H1 (cell line): ENCODE measurements at regions of chr15 and their contacts with region 1.

Region 1: GRCh38 chr15:99104788-99105513 is at the start of gene SYNM:
- DNase-seq: peak in 1 of 2 experiments; percentile 87
- H3K4me3 ChIP-seq: peak within 1 kb of the TSS; percentile 14 to 57 (median 38)
- H3K27ac ChIP-seq: no peak within 1 kb of the TSS
- H3K4me1 ChIP-seq: peaks cover 0 to 2% (median 1%) of the 10 kb centered on the region in 4 experiments; a peak in 2 of 7 replicates
- H3K27me3 ChIP-seq: peaks cover 16 to 44% (median 32%) of the 10 kb centered on the region in 4 experiments
- CTCF ChIP-seq: peak; percentile 77 to 97 (median 85)
- EP300 ChIP-seq: peak in 1 of 2 experiments; percentile 29; a peak in 1 of 3 replicates
- POLR2A ChIP-seq: peak in 1 of 2 experiments; percentile 41; a peak in 1 of 3 replicates
- RAD21 ChIP-seq: peak; percentile 58 to 87
- total RNA-seq, gene SYNM: 2.0 and 2.2 TPM in 2 replicates

Region 2: DNA sequence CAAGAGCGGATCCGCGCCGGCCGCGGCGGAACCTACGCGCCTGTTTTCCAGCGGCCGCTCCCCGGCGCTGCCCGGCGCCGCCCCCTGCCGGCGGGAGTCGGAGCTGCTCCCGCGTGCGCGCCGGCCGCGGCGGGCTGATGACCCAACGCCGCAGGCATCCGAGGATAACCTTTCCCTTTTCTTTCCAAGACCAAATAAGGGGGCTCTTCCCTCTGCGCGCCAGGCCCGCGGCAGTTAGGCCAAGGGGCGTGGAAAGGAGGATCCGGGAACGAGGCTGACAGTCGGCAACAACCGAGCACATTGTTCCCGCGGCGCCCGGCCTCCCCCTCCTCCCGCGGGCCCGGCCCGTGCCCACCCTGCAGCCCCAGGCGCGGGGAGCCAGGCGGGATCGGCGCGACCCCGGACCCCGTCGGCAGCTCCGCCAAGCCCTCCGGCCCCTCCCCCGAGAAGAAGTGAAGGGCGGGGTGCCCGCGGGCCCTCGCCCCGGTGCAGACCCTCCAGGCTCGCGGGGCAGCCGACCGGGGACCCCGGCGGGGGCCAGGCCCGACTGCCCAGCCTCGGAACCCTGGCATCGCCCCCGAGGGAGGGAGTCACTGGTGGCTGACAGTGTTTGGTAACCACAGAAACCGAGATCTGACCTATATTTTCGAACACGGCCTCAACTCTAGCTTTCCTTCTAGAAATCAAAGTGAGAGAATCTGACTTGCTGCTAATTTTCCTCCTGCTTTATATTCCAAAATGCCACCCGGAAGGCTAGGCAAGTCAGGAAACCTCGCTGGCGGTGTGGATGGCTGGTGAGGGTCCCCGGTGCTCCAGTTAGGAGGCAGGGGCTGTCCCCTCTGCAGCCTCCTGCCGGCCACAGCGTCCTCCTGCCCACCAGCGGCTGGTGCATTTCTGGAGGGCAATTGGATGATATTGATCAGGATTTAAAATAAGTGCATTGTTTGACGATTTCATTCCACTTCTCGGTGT is 45.7 kb before region 1 on chr15:
- CTCF ChIA-PET with region 1: interaction called, 11 read pairs
- POLR2A ChIA-PET with region 1: interaction called, 5 read pairs
- DNase-seq: peak; percentile 70 to 86
- H3K4me3 ChIP-seq: peak overlapping the region; percentile 41 to 70 (median 50)
- H3K27ac ChIP-seq: peak overlapping the region; percentile 43; the same call in 1 of the 2 replicates
- H3K4me1 ChIP-seq: peaks cover 0 to 5% (median 0%) of the 10 kb centered on the region in 4 experiments; a peak in 3 of 7 replicates
- H3K27me3 ChIP-seq: 0 out of 7 replicates have a peak, but pooled peaks cover 0 to 9% (median under 1%) of the 10 kb centered on the region in 4 experiments
- CTCF ChIP-seq: peak; percentile 76 to 86 (median 83)
- EP300 ChIP-seq: peak in 1 of 2 experiments; percentile 24; a peak in 1 of 3 replicates
- POLR2A ChIP-seq: peak in 1 of 2 experiments; percentile 71; a peak in 2 of 3 replicates
- RAD21 ChIP-seq: peak; percentile 38 to 77; a peak in 3 of 4 replicates

Region 3: GRCh38 chr15:99118801-99119546 is 14.0 kb after region 1 on chr15:
- CTCF ChIA-PET with region 1: interaction called, 11 read pairs
- POLR2A ChIA-PET with region 1: interaction called, 6 read pairs
- DNase-seq: no peak
- H3K4me3 ChIP-seq: no peak overlapping the region
- H3K27ac ChIP-seq: no peak overlapping the region
- H3K4me1 ChIP-seq: peaks cover 0 to 11% (median 4%) of the 10 kb centered on the region in 4 experiments; a peak in 5 of 7 replicates
- H3K27me3 ChIP-seq: no peaks in the 10 kb centered on the region
- CTCF ChIP-seq: no peak
- EP300 ChIP-seq: no peak
- POLR2A ChIP-seq: no peak
- RAD21 ChIP-seq: no peak

Region 4: DNA sequence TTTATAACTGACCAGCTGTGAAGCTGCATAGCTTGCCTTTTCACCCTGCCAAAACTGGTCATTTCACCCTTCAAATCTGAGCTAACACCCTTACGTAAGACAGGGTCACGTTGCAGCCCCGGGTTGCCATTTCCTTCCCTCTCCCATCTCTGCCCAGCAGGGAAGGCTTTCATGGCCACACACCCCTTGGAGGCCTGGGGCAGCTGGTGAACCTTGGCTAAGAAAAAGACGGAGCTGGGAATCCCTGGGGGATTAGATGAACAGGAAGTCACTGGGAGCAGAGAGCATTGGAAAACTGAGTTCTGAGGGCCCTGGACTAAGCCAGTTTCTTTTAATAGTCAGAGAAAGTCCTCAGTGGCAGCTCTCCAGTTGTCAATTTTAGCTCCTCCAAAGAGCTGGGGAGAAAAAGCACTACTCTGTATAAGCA is 76.6 kb after region 1 on chr15:
- CTCF ChIA-PET with region 1: interaction called, 16 read pairs
- POLR2A ChIA-PET with region 1: no interaction called
- DNase-seq: no peak
- H3K4me3 ChIP-seq: no peak overlapping the region
- H3K27ac ChIP-seq: no peak overlapping the region
- H3K4me1 ChIP-seq: peaks cover 0 to 5% (median 2%) of the 10 kb centered on the region in 4 experiments; a peak in 4 of 7 replicates
- H3K27me3 ChIP-seq: no peaks in the 10 kb centered on the region
- CTCF ChIP-seq: no peak
- EP300 ChIP-seq: no peak
- POLR2A ChIP-seq: no peak
- RAD21 ChIP-seq: no peak

Region 5: GRCh38 chr15:99213187-99213811 is 108.3 kb after region 1 on chr15:
- CTCF ChIA-PET with region 1: interaction called, 114 read pairs
- POLR2A ChIA-PET with region 1: no interaction called
- DNase-seq: peak; percentile 19 to 79
- H3K4me3 ChIP-seq: no peak overlapping the region
- H3K27ac ChIP-seq: no peak overlapping the region
- H3K4me1 ChIP-seq: no peaks in the 10 kb centered on the region
- H3K27me3 ChIP-seq: no peaks in the 10 kb centered on the region
- CTCF ChIP-seq: peak; percentile 46 to 81 (median 72)
- EP300 ChIP-seq: no peak
- POLR2A ChIP-seq: no peak
- RAD21 ChIP-seq: peak; percentile 90 to 91